ENCODE measurements at regions of chr14 and their contacts with region 1.

Region 1: DNA sequence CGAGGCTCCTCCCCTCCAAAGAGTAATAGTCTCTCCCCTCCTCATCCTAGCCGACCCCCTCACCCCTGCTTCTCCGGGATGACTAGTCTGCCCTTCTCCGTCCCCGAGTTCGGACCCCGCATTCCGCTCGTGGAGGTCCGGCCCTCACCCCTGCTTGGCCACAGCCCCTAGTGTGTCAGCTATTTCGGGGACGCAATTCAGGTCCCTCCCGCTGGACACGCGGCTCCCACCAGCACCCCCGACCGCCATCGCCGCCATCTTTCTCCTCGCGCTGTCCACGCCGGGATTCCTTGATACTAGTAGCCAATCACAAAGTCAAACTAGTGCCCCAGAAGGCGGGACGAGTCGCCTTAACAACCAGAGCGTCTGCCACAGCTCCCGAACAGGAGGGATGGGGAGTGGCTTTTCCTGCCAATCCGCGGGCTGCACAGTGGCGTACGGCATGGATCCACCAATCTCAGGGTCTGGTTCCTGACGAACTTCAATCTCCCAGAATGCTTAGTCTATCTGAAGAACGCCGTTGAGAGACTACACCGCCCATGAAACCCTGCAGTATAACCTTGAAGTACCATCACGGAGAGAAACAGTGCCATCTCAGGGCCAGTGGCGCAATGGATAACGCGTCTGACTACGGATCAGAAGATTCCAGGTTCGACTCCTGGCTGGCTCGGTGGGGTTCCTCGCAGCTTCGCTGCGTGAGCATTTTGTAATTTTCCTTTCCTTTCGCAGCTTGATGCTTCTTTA is at the start of gene PRMT5:
- DNase-seq: peak; percentile 92 to 100 (median 97)
- ATAC-seq: peak; percentile 96
- H3K4me3 ChIP-seq: peak within 1 kb of the TSS; percentile 93 to 97
- H3K4me3 Mint-ChIP-seq: no peak within 1 kb of the TSS
- H3K27ac ChIP-seq: peak within 1 kb of the TSS; percentile 74 to 93
- H3K27ac Mint-ChIP-seq: no peak within 1 kb of the TSS
- H3K4me1 ChIP-seq: peaks cover 10% of the 10 kb centered on the region
- H3K4me1 Mint-ChIP-seq: peaks cover 21% of the 10 kb centered on the region
- H3K27me3 ChIP-seq: no peaks in the 10 kb centered on the region
- H3K27me3 Mint-ChIP-seq: no peaks in the 10 kb centered on the region
- CTCF ChIP-seq: no peak
- total RNA-seq, gene PRMT5: 14.3 to 15.2 TPM

Region 2: DNA sequence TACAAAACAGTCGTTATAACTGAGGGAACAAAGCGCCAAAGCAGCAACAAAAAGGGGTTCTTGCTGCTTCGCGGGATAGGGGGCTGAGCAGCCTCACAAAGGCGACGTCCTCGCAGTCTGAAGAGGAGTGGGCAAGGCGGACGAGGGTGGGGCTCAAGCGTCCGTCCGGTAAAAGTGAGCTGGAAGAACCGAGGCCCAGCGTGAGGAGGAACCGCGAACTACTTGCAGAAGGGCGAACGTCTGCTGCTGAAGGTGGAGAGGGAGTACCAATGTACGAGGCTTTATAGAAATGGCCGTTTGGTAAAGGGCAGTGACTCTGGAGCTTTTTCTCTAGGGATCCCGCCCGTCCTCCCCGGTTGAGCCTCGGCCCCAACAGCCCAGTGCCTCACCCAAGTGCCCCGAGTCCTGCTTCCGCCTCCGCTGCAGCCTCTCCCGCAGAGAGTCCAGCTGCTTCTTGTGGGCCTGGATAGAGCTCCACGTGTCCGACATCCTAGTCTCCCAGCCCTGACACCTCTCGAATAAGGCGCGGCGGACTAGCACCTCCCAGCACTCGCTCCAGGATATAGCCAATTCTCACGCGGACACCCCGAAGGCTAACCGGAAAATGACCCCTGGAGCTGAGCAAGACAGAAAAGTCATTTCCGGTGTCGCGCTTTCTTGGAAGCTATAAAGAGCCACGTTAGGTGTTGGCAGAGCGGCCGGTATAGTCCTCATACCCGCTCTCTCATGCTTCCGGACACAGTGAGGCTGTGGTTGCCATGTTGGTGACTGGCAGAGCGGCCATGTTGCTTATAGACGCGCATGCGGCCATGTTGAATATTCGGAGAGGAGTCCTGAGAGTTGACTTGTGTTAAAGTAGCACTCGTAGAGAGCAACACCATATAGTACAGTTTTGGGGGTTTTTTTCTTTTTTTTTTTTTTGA is 1418.3 kb before region 1 on chr14 and contains the start of gene METTL3:
- CTCF ChIA-PET with region 1: no interaction called
- POLR2A ChIA-PET with region 1: no interaction called
- intact Hi-C with region 1: loop called in 1 of 2 experiments (anchors 10 kb)
- DNase-seq: peak; percentile 87 to 98 (median 92)
- ATAC-seq: peak; percentile 99
- H3K4me3 ChIP-seq: peak within 1 kb of the TSS; percentile 85 to 90
- H3K4me3 Mint-ChIP-seq: peak within 1 kb of the TSS; percentile 99
- H3K27ac ChIP-seq: peak within 1 kb of the TSS; percentile 88 to 89
- H3K27ac Mint-ChIP-seq: peak within 1 kb of the TSS; percentile 99
- H3K4me1 ChIP-seq: peaks cover 22% of the 10 kb centered on the region
- H3K4me1 Mint-ChIP-seq: peaks cover 39% of the 10 kb centered on the region
- H3K27me3 ChIP-seq: no peaks in the 10 kb centered on the region
- H3K27me3 Mint-ChIP-seq: no peaks in the 10 kb centered on the region
- CTCF ChIP-seq: no peak
- total RNA-seq, gene METTL3: 23.7 to 26.5 TPM

Region 3: DNA sequence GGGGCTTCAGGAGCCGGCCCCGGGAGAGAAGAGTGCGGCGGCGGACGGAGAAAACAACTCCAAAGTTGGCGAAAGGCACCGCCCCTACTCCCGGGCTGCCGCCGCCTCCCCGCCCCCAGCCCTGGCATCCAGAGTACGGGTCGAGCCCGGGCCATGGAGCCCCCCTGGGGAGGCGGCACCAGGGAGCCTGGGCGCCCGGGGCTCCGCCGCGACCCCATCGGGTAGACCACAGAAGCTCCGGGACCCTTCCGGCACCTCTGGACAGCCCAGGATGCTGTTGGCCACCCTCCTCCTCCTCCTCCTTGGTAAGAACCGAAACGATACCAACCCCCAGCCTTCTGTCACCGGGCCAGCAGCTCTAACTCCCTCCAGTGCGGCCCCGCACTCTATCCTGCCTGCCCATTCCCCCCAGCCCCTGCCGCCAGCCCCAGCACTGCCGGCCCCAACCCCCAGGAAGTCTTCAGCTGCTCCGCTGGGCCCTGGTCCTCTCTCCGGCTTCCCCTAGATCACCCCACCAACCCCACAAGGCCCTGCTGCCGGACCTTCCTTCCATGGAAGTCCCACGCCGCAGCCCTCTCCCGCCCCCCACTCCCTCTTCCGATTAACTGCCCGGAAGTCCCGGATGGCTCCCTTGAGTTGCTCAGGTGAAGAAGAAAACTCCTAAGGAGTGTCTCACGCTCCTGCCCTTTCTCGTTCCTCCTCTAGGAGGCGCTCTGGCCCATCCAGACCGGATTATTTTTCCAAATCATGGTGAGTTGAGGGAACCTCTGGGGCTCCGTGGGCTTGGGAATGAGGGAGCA is 57.0 kb before region 1 on chr14:
- CTCF ChIA-PET with region 1: interaction called, 7 read pairs
- POLR2A ChIA-PET with region 1: interaction called, 12 read pairs
- intact Hi-C with region 1: no loop called
- DNase-seq: peak; percentile 47 to 82 (median 73)
- ATAC-seq: peak; percentile 46
- H3K4me3 ChIP-seq: peak overlapping the region; percentile 82 to 83
- H3K4me3 Mint-ChIP-seq: peak overlapping the region; percentile 91
- H3K27ac ChIP-seq: peak overlapping the region; percentile 85 to 94
- H3K27ac Mint-ChIP-seq: peak overlapping the region; percentile 99
- H3K4me1 ChIP-seq: peaks cover 28% of the 10 kb centered on the region
- H3K4me1 Mint-ChIP-seq: peaks cover 36% of the 10 kb centered on the region
- H3K27me3 ChIP-seq: no peaks in the 10 kb centered on the region
- H3K27me3 Mint-ChIP-seq: no peaks in the 10 kb centered on the region
- CTCF ChIP-seq: peak; percentile 86

Region 4: GRCh38 chr14:22918804-22919600 is 10.3 kb before region 1 on chr14 and contains the start of gene RBM23:
- CTCF ChIA-PET with region 1: interaction called, 21 read pairs
- POLR2A ChIA-PET with region 1: interaction called, 32 read pairs
- intact Hi-C with region 1: loop called (anchors 1 kb)
- DNase-seq: peak; percentile 98 to 100 (median 100)
- ATAC-seq: peak; percentile 91
- H3K4me3 ChIP-seq: peak within 1 kb of the TSS; percentile 59 to 88
- H3K4me3 Mint-ChIP-seq: peak within 1 kb of the TSS; percentile 91
- H3K27ac ChIP-seq: peak within 1 kb of the TSS; percentile 100
- H3K27ac Mint-ChIP-seq: peak within 1 kb of the TSS; percentile 99
- H3K4me1 ChIP-seq: peaks cover 30% of the 10 kb centered on the region
- H3K4me1 Mint-ChIP-seq: peaks cover 42% of the 10 kb centered on the region
- H3K27me3 ChIP-seq: no peaks in the 10 kb centered on the region
- H3K27me3 Mint-ChIP-seq: no peaks in the 10 kb centered on the region
- CTCF ChIP-seq: no peak
- total RNA-seq, gene RBM23: 135 to 141 TPM

Region 5: GRCh38 chr14:22973217-22974032 is 44.1 kb after region 1 on chr14:
- CTCF ChIA-PET with region 1: interaction called, 14 read pairs
- POLR2A ChIA-PET with region 1: interaction called, 3 read pairs
- intact Hi-C with region 1: no loop called
- DNase-seq: peak in 7 of 9 experiments; percentile 30 to 70 (median 45)
- ATAC-seq: peak; percentile 52
- H3K4me3 ChIP-seq: no peak overlapping the region
- H3K4me3 Mint-ChIP-seq: no peak overlapping the region
- H3K27ac ChIP-seq: no peak overlapping the region
- H3K27ac Mint-ChIP-seq: no peak overlapping the region
- H3K4me1 ChIP-seq: no peaks in the 10 kb centered on the region
- H3K4me1 Mint-ChIP-seq: no peaks in the 10 kb centered on the region
- H3K27me3 ChIP-seq: no peaks in the 10 kb centered on the region
- H3K27me3 Mint-ChIP-seq: peaks cover 2% of the 10 kb centered on the region
- CTCF ChIP-seq: peak; percentile 64

Region 6: DNA sequence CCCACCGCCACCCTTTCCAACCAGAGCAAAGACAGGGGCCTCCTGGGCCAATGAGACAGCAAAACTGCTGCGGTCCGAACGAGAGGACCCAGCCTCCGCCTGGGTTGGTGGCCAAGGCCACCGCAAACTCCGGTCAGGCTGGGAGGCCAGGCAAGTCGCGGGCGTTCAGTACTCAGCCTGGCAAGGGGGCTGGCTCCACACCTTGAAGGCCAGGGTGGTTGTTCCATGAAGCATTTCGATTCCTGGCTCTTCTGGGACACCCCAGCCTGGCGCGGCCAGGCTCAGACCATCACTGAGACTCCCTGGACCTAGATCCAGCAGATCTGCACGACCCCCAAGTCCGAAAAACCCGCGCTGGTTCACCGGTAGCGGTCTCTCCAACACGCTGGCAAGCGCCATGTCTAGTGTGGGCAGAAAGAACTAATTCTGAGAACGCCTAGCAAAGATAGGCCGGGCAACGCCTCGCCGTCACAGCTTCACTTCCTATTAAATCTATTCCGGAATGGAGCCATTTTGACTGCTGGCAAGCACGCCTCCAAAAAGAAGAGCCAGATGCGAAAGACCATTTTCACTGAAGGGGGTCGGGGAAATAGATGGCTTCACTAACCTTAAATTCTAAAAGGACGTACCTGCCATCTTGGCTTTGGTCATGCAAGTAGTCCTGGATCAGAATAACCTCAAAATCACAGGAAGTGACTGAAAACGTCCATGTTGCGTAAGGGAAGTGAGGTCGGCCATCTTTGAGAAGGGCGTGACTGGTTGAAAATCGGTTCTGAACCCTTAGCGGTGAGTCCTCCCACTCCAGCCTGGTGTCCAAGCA is 105.4 kb after region 1 on chr14 and contains the start of gene PSMB5:
- CTCF ChIA-PET with region 1: interaction called, 4 read pairs
- POLR2A ChIA-PET with region 1: no interaction called
- intact Hi-C with region 1: loop called in 1 of 2 experiments (anchors 1 kb)
- DNase-seq: peak; percentile 74 to 97 (median 87)
- ATAC-seq: peak; percentile 91
- H3K4me3 ChIP-seq: peak within 1 kb of the TSS; percentile 67 to 71
- H3K4me3 Mint-ChIP-seq: peak within 1 kb of the TSS; percentile 90
- H3K27ac ChIP-seq: peak within 1 kb of the TSS; percentile 75 to 97
- H3K27ac Mint-ChIP-seq: peak within 1 kb of the TSS; percentile 98
- H3K4me1 ChIP-seq: peaks cover 21% of the 10 kb centered on the region
- H3K4me1 Mint-ChIP-seq: peaks cover 34% of the 10 kb centered on the region
- H3K27me3 ChIP-seq: no peaks in the 10 kb centered on the region
- H3K27me3 Mint-ChIP-seq: no peaks in the 10 kb centered on the region
- CTCF ChIP-seq: no peak
- total RNA-seq, gene PSMB5: 18.6 to 20.2 TPM

Region 7: DNA sequence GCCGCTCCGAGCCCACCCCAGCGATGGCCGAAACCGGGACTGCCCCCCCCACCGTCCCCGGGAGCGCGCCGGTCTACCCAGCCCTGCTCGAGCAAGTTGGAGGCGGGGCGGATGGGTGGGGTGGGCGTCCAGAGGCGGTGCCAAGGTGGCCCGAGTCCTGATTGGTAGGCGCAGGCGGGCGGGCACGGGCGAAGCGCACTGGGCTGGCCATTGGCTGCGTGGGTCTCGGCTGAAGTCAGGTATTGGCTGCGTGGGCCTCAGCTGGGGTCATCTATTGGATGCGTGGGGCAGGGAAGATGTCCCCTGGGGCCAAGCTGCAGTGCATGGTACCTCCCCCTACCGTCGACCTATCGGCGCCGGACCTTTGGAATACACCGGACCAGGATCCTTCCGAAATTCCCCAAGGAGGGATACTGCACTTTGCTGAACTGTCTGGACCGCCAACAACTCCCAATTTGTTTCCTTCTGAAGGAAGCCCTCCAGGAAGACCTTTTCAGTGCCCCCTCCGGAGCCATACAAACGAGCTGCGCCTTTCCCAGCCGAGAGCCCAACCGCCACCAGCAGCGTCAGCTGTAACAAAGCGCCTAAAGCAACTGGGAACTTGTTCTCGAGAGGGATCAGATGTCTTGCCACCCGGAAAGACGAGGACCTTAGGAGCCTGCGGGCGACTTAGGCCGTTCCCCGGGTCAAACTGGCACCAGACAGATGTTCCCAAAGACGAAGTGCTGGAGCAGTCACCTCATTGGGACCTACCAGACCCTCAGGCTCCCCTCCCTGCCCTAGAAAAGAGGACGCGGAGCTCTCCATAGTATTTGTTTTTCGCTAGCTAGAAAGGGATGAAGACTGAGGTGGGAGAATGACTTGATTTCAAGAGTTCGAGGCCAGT is 357.0 kb after region 1 on chr14 and contains the start of gene HOMEZ:
- CTCF ChIA-PET with region 1: no interaction called
- POLR2A ChIA-PET with region 1: no interaction called
- intact Hi-C with region 1: loop called in 1 of 2 experiments (anchors 1 kb)
- DNase-seq: peak; percentile 94 to 98 (median 97)
- ATAC-seq: peak; percentile 96
- H3K4me3 ChIP-seq: peak within 1 kb of the TSS; percentile 89 to 94
- H3K4me3 Mint-ChIP-seq: peak within 1 kb of the TSS; percentile 99
- H3K27ac ChIP-seq: peak within 1 kb of the TSS; percentile 67 to 83
- H3K27ac Mint-ChIP-seq: peak within 1 kb of the TSS; percentile 96
- H3K4me1 ChIP-seq: peaks cover 20% of the 10 kb centered on the region
- H3K4me1 Mint-ChIP-seq: peaks cover 36% of the 10 kb centered on the region
- H3K27me3 ChIP-seq: no peaks in the 10 kb centered on the region
- H3K27me3 Mint-ChIP-seq: no peaks in the 10 kb centered on the region
- CTCF ChIP-seq: no peak
- total RNA-seq, gene HOMEZ: 3.1 to 4.0 TPM

Region 8: GRCh38 chr14:23352511-23353432 is 423.5 kb after region 1 on chr14 and contains the start of gene SLC22A17:
- CTCF ChIA-PET with region 1: no interaction called
- POLR2A ChIA-PET with region 1: no interaction called
- intact Hi-C with region 1: no loop called
- DNase-seq: peak; percentile 28 to 80 (median 70)
- ATAC-seq: peak; percentile 95
- H3K4me3 ChIP-seq: peak within 1 kb of the TSS; percentile 44 to 55
- H3K4me3 Mint-ChIP-seq: peak within 1 kb of the TSS; percentile 77
- H3K27ac ChIP-seq: peak within 1 kb of the TSS in 1 of 2 experiments; percentile 3
- H3K27ac Mint-ChIP-seq: peak within 1 kb of the TSS; percentile 34
- H3K4me1 ChIP-seq: peaks cover 8% of the 10 kb centered on the region
- H3K4me1 Mint-ChIP-seq: peaks cover 10% of the 10 kb centered on the region
- H3K27me3 ChIP-seq: peaks cover 0 to 2% of the 10 kb centered on the region in 2 experiments
- H3K27me3 Mint-ChIP-seq: peaks cover 37% of the 10 kb centered on the region
- CTCF ChIP-seq: no peak
- total RNA-seq, gene SLC22A17: 12.3 to 13.5 TPM

Measured in CD8-positive, alpha-beta T cell (primary cell).